Stomach (tissue), 19 donors: ENCODE measurements at regions of chr15 and their contacts with region 1.

Region 1: DNA sequence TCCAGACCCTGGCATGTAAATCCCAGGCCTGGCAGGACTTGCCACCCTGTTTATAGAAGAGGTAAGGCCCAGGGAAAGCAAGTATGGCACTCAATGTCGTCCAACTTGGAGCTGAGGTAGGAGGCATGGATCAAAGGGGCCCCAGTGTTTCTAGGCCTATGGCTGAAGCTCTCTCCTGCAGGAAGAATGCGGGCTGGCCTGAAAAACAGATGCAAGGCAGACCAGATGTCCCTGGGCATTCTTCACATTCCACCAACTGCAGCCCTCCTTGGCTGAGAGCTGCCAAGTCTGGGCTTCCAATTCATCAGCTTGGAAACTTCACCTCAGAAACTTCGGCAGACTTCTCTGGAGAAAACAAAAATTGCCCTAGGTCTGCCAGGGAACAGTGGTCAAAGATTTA is 22.2 kb downstream of the MESD start:
- DNase-seq: peak in 1 of 2 donors; percentile 43
- H3K4me3 ChIP-seq: no peak overlapping the region
- H3K27ac ChIP-seq: no peak overlapping the region
- H3K4me1 ChIP-seq: peaks cover 0 to 10% (median 3%) of the 10 kb centered on the region in 4 donors
- H3K27me3 ChIP-seq: no peaks in the 10 kb centered on the region
- CTCF ChIP-seq: no peak
- EP300 ChIP-seq: no peak
- POLR2A ChIP-seq: no peak

Region 2: DNA sequence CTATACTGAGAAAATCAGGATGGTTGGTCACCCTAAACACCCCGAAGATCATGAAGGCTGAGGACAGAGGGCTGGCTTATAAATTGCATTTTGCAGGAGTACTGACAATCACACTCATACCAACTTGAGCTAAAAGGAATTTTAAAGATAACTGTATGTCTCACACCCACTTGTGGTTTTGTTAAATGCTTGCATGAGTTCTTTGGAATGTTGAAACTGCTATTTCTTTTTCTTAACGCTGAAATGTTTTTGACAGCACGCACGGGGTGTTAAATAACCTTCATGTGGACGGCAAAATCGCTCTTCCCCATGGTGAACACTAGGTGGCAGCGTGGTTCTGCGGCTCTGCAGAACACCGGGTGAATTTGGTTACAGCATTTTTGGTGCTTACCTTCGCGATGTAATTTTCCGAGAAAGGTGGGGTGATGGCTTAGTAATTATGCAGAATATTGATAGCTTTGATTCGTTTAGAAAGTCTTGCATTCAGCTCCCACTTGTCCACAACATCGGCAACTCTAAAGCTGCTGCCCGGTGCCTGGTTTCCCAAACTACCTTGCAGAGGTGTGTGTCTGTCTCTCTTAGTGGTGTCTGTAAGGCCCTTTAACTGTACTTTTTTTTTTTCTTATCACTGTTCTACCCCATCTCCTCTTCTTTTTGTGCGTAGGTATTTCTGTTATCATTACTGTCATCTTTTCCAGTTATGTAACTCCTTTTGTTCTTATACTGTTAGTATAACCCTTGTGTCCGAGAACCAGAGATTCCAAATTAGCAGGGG is 511.6 kb before region 1 on chr15:
- intact Hi-C with region 1: loop called (anchors 5 kb)
- DNase-seq: peak; percentile 56 to 90
- H3K4me3 ChIP-seq: no peak overlapping the region
- H3K27ac ChIP-seq: no peak overlapping the region
- H3K4me1 ChIP-seq: peaks cover under 1 to 9% (median 7%) of the 10 kb centered on the region in 4 donors
- H3K27me3 ChIP-seq: no peaks in the 10 kb centered on the region
- CTCF ChIP-seq: peak in 5 of 7 experiments; percentile 82 to 88 (median 85)
- EP300 ChIP-seq: no peak
- POLR2A ChIP-seq: no peak

Region 3: GRCh38 chr15:80475572-80475971 is 491.9 kb before region 1 on chr15:
- intact Hi-C with region 1: no loop called
- DNase-seq: no peak
- H3K4me3 ChIP-seq: no peak overlapping the region
- H3K27ac ChIP-seq: no peak overlapping the region
- H3K4me1 ChIP-seq: peaks cover 0 to 7% (median 0%) of the 10 kb centered on the region in 4 donors
- H3K27me3 ChIP-seq: no peaks in the 10 kb centered on the region
- CTCF ChIP-seq: no peak
- EP300 ChIP-seq: no peak
- POLR2A ChIP-seq: no peak

Region 4: DNA sequence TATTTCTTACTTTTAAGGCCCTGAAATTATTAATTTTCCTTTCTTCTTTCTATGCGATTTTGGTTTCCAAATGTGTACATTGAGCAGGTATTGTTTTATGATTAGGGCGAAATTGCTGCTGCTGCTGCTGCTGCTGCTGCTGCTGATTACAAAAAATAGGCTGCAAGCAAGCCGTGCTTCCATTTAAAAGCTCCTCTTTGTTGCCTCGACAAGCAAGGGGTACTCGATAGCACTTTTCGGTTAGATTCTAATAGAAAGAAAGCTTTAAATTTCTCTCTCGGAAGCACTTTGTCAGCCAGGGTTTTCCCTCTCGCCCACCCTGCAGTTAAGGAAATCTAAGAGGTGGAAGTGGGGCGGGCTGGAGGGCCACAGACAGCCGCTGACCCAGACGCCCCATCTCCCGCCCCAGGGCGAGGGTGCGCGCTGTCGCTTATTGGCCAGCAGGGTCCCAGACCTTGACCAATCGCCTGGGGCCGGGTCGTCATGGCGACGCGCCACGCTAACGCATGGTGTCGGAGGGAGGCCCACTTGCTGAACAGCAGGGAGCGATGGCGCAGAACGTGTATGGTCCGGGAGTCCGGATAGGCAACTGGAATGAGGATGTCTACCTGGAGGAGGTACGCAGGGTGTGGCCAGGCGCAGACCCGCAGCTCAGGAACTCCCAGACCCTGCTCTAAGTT is 166.5 kb after region 1 on chr15 and contains the start of gene CFAP161:
- intact Hi-C with region 1: no loop called
- DNase-seq: peak; percentile 75 to 94
- H3K4me3 ChIP-seq: peak within 1 kb of the TSS; percentile 32 to 48 (median 39)
- H3K27ac ChIP-seq: peak within 1 kb of the TSS in 1 of 5 donors; percentile 31
- H3K4me1 ChIP-seq: peaks cover 6 to 19% (median 11%) of the 10 kb centered on the region in 4 donors
- H3K27me3 ChIP-seq: peaks cover 0 to 15% (median 0%) of the 10 kb centered on the region in 3 donors
- CTCF ChIP-seq: no peak
- EP300 ChIP-seq: no peak
- POLR2A ChIP-seq: no peak
- total RNA-seq, gene CFAP161: 2.6 TPM in 1 of 5 donors, not detected in the others